ENCODE measurements at regions of chr2 and their contacts with region 1.

Region 1: GRCh38 chr2:54579684-54580620 is 123.8 kb downstream of the SPTBN1 start:
- DNase-seq: peak in 27 of 35 experiments; percentile 31 to 81 (median 54)
- ATAC-seq: peak; percentile 75 to 90 (median 84)
- H3K4me3 ChIP-seq: peak overlapping the region; percentile 5 to 46
- H3K4me3 Mint-ChIP-seq: peak overlapping the region; percentile 60 to 75 (median 68)
- H3K27ac ChIP-seq: peak overlapping the region; percentile 98
- H3K27ac Mint-ChIP-seq: peak overlapping the region; percentile 92 to 95
- H3K4me1 ChIP-seq: peaks cover 82 to 91% of the 10 kb centered on the region in 2 experiments
- H3K4me1 Mint-ChIP-seq: peaks cover 93 to 96% (median 94%) of the 10 kb centered on the region in 3 donors
- H3K27me3 ChIP-seq: no peaks in the 10 kb centered on the region
- H3K27me3 Mint-ChIP-seq: no peaks in the 10 kb centered on the region

Region 2: GRCh38 chr2:53786705-53787612 is 793.0 kb before region 1 on chr2 and contains the starts of genes ASB3 and ERLEC1:
- CTCF ChIA-PET with region 1: no interaction called
- POLR2A ChIA-PET with region 1: interaction called in 1 of 2 experiments, 10 read pairs
- DNase-seq: peak; percentile 63 to 92 (median 86)
- ATAC-seq: peak; percentile 92 to 94 (median 94)
- H3K4me3 ChIP-seq: peak within 1 kb of the TSS; percentile 76 to 94
- H3K4me3 Mint-ChIP-seq: peak within 1 kb of the TSS; percentile 97 to 99 (median 97)
- H3K27ac ChIP-seq: peak within 1 kb of the TSS; percentile 69
- H3K27ac Mint-ChIP-seq: peak within 1 kb of the TSS; percentile 93 to 95
- H3K4me1 ChIP-seq: peaks cover 12 to 18% of the 10 kb centered on the region in 2 experiments
- H3K4me1 Mint-ChIP-seq: peaks cover 61 to 64% (median 64%) of the 10 kb centered on the region in 3 donors
- H3K27me3 ChIP-seq: no peaks in the 10 kb centered on the region
- H3K27me3 Mint-ChIP-seq: no peaks in the 10 kb centered on the region
- total RNA-seq, gene ASB3: 27.5 to 36.4 (median 30.7) TPM
- total RNA-seq, gene ERLEC1: 16.7 to 28.3 (median 25.2) TPM

Region 3: DNA sequence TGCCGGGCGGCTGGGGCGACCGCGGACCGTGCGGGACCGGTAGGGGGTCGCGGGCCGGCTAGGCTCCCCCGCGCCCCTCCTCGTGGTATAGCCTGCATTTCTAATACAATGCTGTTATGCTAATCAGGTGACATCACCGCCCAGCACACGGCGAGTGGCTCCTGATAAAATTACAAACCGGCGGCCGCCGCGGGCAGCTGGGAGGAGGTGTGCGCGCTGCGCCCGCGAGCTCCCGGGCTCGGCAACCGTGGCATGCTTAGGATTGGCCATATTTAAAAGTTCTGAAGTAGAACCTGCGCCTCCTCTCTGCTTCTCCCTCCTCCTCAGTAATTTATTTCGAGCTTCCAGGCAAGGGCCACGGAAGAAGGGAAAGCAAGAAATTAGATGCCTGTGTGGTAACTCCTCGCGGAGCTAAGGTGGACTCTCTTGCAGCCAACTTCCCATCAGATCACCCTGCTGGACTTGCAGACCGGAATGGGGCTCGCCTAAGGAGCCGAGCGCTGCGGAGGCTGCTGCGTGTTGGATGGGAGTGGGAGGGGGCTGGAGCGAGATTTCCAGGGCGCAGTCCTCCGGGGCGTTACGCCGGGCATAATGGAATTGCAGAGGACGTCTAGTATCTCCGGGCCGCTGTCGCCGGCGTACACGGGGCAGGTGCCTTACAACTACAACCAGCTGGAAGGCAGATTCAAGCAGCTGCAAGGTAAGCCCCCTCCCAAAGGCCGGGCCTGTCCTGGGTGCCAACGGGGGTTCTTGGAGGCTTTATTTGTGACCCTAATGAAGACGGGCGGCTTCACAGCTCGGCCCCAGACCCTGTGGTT is 21.6 kb before region 1 on chr2:
- CTCF ChIA-PET with region 1: interaction called, 6 to 23 read pairs
- POLR2A ChIA-PET with region 1: interaction called, 8 to 90 read pairs
- DNase-seq: peak; percentile 32 to 82 (median 65)
- ATAC-seq: peak; percentile 68 to 72 (median 72)
- H3K4me3 ChIP-seq: peak overlapping the region; percentile 77 to 88
- H3K4me3 Mint-ChIP-seq: peak overlapping the region; percentile 93 to 98 (median 95)
- H3K27ac ChIP-seq: peak overlapping the region; percentile 84
- H3K27ac Mint-ChIP-seq: peak overlapping the region; percentile 91
- H3K4me1 ChIP-seq: peaks cover 29% of the 10 kb centered on the region in 2 experiments
- H3K4me1 Mint-ChIP-seq: peaks cover 46 to 72% (median 56%) of the 10 kb centered on the region in 3 donors
- H3K27me3 ChIP-seq: no peaks in the 10 kb centered on the region
- H3K27me3 Mint-ChIP-seq: no peaks in the 10 kb centered on the region

Region 4: DNA sequence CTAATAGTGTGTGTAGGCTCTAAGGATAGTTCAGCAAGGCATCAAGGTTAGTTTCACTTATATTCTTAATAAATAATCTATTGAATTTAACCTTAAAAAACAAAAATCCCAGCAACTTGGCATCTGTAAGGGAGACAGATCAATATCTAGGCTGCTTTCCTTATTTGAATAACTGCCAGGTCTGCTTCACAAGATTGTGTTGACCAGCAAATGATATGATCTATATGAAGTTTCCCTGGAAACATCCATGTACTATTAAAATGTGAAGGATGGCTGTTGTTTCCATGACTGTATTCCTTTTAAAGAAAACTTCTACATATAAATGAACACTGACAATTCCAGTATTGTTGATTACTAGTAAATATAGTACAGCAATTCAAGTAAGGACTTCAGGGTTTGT is 14.4 kb before region 1 on chr2:
- CTCF ChIA-PET with region 1: interaction called, 6 to 10 read pairs
- POLR2A ChIA-PET with region 1: interaction called, 3 to 90 read pairs
- DNase-seq: no peak
- ATAC-seq: no peak
- H3K4me3 ChIP-seq: no peak overlapping the region
- H3K4me3 Mint-ChIP-seq: peak overlapping the region in 1 of 3 donors; percentile 98
- H3K27ac ChIP-seq: no peak overlapping the region
- H3K27ac Mint-ChIP-seq: peak overlapping the region; percentile 84 to 87
- H3K4me1 ChIP-seq: peaks cover 64 to 73% of the 10 kb centered on the region in 2 experiments
- H3K4me1 Mint-ChIP-seq: peaks cover 84 to 98% (median 90%) of the 10 kb centered on the region in 3 donors
- H3K27me3 ChIP-seq: no peaks in the 10 kb centered on the region
- H3K27me3 Mint-ChIP-seq: no peaks in the 10 kb centered on the region

Region 5: DNA sequence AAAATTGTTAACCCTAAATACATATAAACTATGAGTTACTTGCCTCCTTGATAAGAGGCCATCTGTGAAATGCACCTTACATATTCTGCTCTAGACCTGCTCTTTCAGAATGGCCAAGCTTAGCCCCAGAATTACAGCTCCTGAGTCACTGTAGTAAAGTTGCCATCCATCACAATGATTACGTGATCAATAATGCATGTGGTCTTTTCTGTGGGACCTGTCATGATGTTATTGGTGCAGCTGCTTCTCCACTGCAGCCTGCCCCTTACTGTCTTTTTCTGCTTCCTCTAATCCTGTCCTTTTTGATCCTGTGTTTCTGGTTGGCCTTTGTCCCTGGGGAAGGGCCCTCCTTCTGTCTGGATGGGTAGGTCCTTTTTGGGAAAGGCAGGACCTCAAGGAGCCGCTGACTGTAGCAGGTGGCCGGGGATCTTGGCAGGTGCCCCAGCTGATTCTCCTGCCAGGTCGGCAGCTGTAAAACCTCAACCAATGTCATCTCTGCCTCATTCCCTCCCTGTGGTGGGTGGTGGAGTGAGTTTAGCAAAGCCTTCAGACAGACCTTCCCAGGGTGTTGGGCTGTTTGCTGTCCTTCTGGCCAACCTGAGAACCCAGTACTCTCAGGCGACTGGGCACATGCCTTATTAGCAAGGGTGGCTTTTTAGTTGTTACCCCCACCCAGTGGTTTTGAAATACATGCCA is 17.3 kb after region 1 on chr2:
- CTCF ChIA-PET with region 1: interaction called, 4 to 10 read pairs
- POLR2A ChIA-PET with region 1: interaction called, 5 to 8 read pairs
- DNase-seq: peak in 5 of 35 experiments; percentile 14 to 44 (median 25)
- ATAC-seq: peak in 2 of 4 experiments; percentile 28 to 45
- H3K4me3 ChIP-seq: peak overlapping the region in 1 of 2 donors; percentile 25
- H3K4me3 Mint-ChIP-seq: peak overlapping the region; percentile 71 to 82 (median 78)
- H3K27ac ChIP-seq: peak overlapping the region; percentile 62
- H3K27ac Mint-ChIP-seq: peak overlapping the region; percentile 99 to 100
- H3K4me1 ChIP-seq: peaks cover 81 to 89% of the 10 kb centered on the region in 2 experiments
- H3K4me1 Mint-ChIP-seq: peaks cover 93 to 100% (median 98%) of the 10 kb centered on the region in 3 donors
- H3K27me3 ChIP-seq: no peaks in the 10 kb centered on the region
- H3K27me3 Mint-ChIP-seq: no peaks in the 10 kb centered on the region

Region 6: DNA sequence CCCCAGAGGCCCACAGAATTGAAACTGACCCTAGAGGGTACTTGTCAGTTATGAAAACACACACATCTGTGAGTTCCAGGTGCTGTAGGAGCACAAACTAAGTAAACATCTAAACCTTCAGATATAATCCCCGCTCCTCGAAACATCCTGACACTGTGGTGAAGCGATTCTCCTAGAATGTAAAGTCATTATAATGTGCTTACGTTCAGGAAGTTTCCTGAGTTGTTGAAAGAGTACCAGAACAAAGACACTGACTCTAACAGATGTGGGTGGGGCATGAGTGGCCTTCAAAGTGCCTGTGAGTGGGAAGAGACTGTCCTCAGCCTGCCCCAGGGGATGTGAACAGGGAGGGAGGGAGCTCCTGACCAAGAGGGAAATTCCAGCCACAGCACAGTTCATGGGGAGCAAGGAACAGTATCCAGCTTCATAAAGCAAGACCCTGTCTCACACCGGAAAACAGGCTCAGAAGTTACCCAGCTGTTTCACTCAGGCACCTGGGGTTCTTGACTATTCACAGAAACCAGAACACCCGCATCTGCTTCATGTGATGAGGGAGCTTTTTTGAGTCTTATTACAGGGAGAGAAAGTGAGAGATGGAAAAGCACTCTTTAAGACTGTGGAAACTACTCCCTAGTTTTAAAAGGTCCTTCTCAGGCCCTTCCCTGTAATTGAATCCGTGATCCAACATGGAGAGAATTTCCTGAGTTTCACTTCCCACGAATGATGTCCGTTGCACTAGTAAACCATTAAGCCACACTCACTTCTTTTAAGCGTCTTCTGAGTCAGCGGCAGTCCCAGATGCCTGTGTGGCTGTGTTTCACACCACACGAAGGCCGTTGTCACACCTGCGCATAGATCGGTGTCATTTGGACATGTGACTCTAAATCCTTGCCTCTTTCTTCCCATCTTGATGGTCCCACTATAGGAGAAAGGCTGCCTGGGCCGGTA is 54.9 kb after region 1 on chr2:
- CTCF ChIA-PET with region 1: no interaction called
- POLR2A ChIA-PET with region 1: interaction called in 1 of 2 experiments, 10 read pairs
- DNase-seq: peak in 12 of 35 experiments; percentile 2 to 47 (median 18)
- ATAC-seq: peak; percentile 31 to 85 (median 54)
- H3K4me3 ChIP-seq: no peak overlapping the region
- H3K4me3 Mint-ChIP-seq: peak overlapping the region in 1 of 3 donors; percentile 51
- H3K27ac ChIP-seq: peak overlapping the region; percentile 4
- H3K27ac Mint-ChIP-seq: peak overlapping the region; percentile 78 to 84
- H3K4me1 ChIP-seq: peaks cover 11 to 13% of the 10 kb centered on the region in 2 experiments
- H3K4me1 Mint-ChIP-seq: peaks cover 43 to 45% (median 44%) of the 10 kb centered on the region in 3 donors
- H3K27me3 ChIP-seq: no peaks in the 10 kb centered on the region
- H3K27me3 Mint-ChIP-seq: no peaks in the 10 kb centered on the region